ENCODE measurements at regions of chr2 and their contacts with region 1.

Region 1: GRCh38 chr2:106193977-106194778 is at the start of gene UXS1:
- DNase-seq: peak; percentile 97
- H3K4me3 ChIP-seq: peak within 1 kb of the TSS; percentile 85 to 87
- H3K27ac ChIP-seq: peak within 1 kb of the TSS; percentile 71 to 83
- H3K4me1 ChIP-seq: no peaks in the 10 kb centered on the region
- H3K27me3 ChIP-seq: no peaks in the 10 kb centered on the region
- CTCF ChIP-seq: peak in 2 of 4 experiments; percentile 10 to 19
- POLR2A ChIP-seq: peak; percentile 64
- total RNA-seq, gene UXS1: 30.7 to 54.8 TPM

Region 2: DNA sequence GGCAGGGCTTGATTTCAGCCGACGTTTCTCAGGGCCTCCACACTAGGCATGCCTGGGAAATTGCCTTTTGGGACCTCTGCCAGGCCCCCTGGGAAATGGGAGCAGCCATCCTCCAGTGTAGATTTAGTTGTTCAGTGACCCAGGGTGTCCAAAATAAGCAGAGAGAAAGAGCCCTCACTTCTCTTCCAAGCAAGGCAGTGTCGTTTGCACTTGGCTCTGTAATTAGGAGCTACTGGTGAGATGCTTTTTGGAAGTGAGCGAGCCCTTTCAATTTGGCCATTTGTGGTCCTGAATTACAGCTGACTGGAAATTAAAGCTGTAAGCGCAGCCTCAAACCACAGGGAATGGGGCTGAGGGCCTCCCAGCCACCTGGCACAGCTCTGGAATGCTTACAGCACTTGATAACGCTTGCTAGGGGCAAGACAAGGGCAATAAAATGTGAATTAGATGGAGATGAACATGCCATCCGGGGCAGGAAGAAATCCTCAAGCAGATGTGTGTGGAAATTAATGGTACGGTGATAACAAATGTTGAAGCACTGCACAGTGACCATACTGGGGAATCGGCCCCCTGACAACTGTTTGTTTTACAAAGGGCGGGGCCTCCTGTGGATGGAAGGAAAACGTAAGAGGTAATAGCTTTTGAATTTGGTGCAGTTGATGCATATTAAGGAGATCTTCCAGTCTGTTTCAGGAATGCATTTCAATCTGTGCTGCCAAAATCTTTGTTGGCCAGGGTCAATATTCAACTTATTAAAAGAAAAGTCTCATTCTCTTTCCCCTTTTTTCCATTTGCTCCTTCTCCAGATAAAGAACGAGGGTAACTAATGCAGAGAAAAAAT is 173.1 kb before region 1 on chr2:
- intact Hi-C with region 1: loop called (anchors 10 kb)
- DNase-seq: no peak
- H3K4me3 ChIP-seq: no peak overlapping the region
- H3K27ac ChIP-seq: peak overlapping the region in 1 of 2 donors; percentile 30
- H3K4me1 ChIP-seq: no peaks in the 10 kb centered on the region
- H3K27me3 ChIP-seq: no peaks in the 10 kb centered on the region
- CTCF ChIP-seq: no peak
- POLR2A ChIP-seq: no peak

Region 3: DNA sequence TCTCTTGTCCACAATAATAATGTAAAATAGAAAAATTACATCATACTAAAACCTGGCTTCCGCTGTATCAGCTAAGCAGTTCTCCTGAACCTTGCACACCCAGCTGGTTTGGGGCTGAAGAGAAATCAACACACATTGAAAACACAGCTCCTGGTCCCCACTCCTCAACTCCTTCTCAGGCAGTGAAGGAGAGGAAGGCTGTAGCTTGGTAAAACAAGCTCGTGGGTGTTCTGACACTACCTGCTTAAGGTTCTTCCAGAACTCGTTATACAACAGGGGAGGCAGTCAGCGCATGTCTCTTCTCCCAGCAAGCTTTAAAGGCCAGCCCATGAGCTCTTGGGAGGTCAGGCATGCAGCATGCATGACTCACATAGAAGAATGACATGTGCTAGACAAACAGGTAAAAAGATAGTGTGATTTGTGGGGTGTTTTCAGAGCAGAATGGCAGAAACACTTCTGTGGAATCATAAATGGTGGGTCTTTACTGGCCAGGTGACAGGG is 69.2 kb before region 1 on chr2:
- intact Hi-C with region 1: loop called (anchors 5 kb)
- DNase-seq: no peak
- H3K4me3 ChIP-seq: no peak overlapping the region
- H3K27ac ChIP-seq: no peak overlapping the region
- H3K4me1 ChIP-seq: no peaks in the 10 kb centered on the region
- H3K27me3 ChIP-seq: no peaks in the 10 kb centered on the region
- CTCF ChIP-seq: no peak
- POLR2A ChIP-seq: no peak

Region 4: GRCh38 chr2:106147159-106147558 is 47.0 kb before region 1 on chr2:
- intact Hi-C with region 1: no loop called
- DNase-seq: no peak
- H3K4me3 ChIP-seq: no peak overlapping the region
- H3K27ac ChIP-seq: no peak overlapping the region
- H3K4me1 ChIP-seq: no peaks in the 10 kb centered on the region
- H3K27me3 ChIP-seq: no peaks in the 10 kb centered on the region
- CTCF ChIP-seq: no peak
- POLR2A ChIP-seq: no peak